ENCODE measurements at regions of chr10 and their contacts with region 1.

Region 1: DNA sequence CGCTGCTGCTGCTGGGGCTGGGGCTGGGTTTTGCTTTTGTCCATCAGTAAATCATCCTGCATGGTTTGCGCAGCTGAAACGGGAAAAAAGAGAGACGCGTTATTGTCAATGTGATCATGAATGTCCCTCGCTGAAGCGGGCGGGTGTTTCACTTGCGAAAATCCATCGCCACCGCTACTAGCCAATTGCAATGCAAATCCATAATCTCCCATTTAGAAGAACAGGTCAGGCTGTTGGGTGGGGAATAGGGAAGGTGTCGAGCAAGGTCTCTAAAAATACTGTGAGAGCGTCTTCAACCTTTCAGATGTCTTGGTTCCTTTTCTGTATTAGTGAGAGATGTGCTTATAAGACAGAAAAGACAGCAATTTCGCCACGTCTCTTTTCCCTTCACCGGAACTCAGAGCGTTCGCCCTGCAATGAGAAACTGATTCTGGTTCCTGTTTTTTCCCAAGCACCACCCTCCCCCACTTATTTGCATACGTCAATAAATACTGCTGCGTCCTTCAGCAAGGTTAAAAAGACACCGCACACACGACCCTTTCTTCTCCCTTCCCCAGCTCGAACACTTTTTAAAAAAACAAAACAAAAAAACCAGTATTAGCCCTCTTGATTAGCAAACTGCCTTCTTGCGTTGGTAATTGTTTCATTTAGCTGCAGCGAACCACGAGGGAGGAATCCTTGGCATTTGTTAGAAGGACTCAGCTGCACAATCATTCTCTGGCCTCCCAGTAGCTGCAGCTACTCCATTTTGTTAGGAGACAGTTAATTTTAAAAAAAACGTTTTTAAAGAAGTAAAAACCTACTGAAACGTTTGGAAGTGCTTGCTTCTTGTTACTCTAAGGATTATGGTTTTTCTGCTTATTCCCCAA is 50.4 kb downstream of the CPEB3 start:
- DNase-seq: peak; percentile 21 to 49
- H3K4me3 ChIP-seq: peak overlapping the region; percentile 82
- H3K27ac ChIP-seq: peak overlapping the region; percentile 57
- H3K4me1 ChIP-seq: peaks cover 59% of the 10 kb centered on the region
- H3K27me3 ChIP-seq: no peaks in the 10 kb centered on the region
- CTCF ChIP-seq: no peak

Region 2: DNA sequence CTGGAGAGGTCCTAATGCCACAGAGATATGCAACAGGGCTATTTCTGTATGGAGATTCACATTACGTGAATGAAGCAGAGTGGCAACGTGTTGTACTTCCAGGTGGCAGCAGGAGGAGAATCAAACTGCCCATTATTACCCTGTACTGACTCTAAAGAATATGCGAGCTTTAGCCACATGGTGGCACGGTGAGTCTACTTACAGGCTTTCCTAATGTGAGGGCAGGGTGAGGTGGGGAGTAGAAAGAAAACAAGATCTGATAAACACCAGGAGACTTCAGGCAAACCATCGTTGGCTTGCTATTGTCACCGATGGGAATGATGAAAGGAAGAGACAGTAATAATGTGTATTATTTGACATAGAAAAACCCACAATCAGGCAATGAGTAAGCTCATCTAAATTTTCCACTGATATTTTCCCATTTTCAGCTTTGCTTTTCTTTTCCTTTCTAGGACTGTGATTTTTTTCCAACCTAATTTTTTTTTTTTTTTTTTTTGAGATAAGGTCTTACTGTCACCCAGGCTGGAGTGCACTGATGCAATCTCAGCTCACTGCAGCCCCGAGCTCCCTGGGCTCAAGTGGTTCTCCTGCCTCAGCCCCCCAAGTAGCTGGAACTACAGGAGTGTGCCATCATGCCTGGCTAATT is 152.7 kb before region 1 on chr10:
- CTCF ChIA-PET with region 1: no interaction called
- POLR2A ChIA-PET with region 1: no interaction called
- intact Hi-C with region 1: loop called (anchors 1 kb)
- DNase-seq: peak; percentile 67 to 75
- H3K4me3 ChIP-seq: no peak overlapping the region
- H3K27ac ChIP-seq: peak overlapping the region; percentile 36; the same call in 1 of the 2 replicates
- H3K4me1 ChIP-seq: peaks cover 5% of the 10 kb centered on the region; the same call in 1 of the 2 replicates
- H3K27me3 ChIP-seq: no peaks in the 10 kb centered on the region
- CTCF ChIP-seq: peak; percentile 82

Region 3: DNA sequence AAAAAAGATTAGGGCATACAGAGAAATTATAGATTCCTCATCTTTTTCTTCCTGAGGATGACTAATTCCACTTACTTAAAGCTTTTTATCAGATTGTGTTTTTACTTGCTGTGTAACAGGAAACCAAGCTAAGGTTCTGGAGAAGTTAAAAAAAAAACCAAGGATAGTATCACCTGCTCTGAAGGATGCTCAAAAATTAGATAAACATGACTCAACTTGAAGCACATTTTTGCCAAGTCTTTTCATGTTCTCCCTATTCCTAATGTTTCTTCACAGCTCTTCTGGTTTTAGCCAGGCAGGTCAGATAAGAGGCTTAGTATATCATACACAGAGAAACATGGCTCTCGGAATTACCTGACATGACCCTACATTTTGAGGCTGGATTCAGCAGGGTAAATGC is 40.0 kb before region 1 on chr10:
- CTCF ChIA-PET with region 1: no interaction called
- POLR2A ChIA-PET with region 1: interaction called, 11 read pairs
- intact Hi-C with region 1: no loop called
- DNase-seq: no peak
- H3K4me3 ChIP-seq: no peak overlapping the region
- H3K27ac ChIP-seq: no peak overlapping the region
- H3K4me1 ChIP-seq: no peaks in the 10 kb centered on the region
- H3K27me3 ChIP-seq: no peaks in the 10 kb centered on the region
- CTCF ChIP-seq: no peak

Region 4: GRCh38 chr10:92290837-92291615 is 50.5 kb after region 1 on chr10 and contains the starts of genes CPEB3 and MARCHF5:
- CTCF ChIA-PET with region 1: interaction called, 4 read pairs
- POLR2A ChIA-PET with region 1: no interaction called
- intact Hi-C with region 1: loop called (anchors 2 kb)
- DNase-seq: peak; percentile 81 to 90
- H3K4me3 ChIP-seq: peak within 1 kb of the TSS; percentile 89
- H3K27ac ChIP-seq: peak within 1 kb of the TSS; percentile 59
- H3K4me1 ChIP-seq: peaks cover 8% of the 10 kb centered on the region
- H3K27me3 ChIP-seq: no peaks in the 10 kb centered on the region
- CTCF ChIP-seq: peak; percentile 57
- total RNA-seq, gene CPEB3: 1.1 and 1.4 TPM in 2 replicates
- total RNA-seq, gene MARCHF5: 31.5 and 39.1 TPM in 2 replicates

Region 5: GRCh38 chr10:92799591-92800446 is 559.3 kb after region 1 on chr10:
- CTCF ChIA-PET with region 1: no interaction called
- POLR2A ChIA-PET with region 1: interaction called, 12 read pairs
- intact Hi-C with region 1: no loop called
- DNase-seq: peak in 1 of 2 experiments; percentile 68
- H3K4me3 ChIP-seq: peak overlapping the region; percentile 14; the same call in 1 of the 2 replicates
- H3K27ac ChIP-seq: peak overlapping the region; percentile 26; the same call in 1 of the 2 replicates
- H3K4me1 ChIP-seq: peaks cover 19% of the 10 kb centered on the region
- H3K27me3 ChIP-seq: no peaks in the 10 kb centered on the region
- CTCF ChIP-seq: no peak

Measured in PC-9 (cell line).